ENCODE measurements at regions of chr16 and their contacts with region 1.

Region 1: GRCh38 chr16:57091975-57092785 is at the start of gene CPNE2:
- DNase-seq: peak in 2 of 5 donors; percentile 15 to 16
- H3K4me3 ChIP-seq: peak within 1 kb of the TSS in 1 of 2 donors; percentile 41
- H3K4me3 Mint-ChIP-seq: peak within 1 kb of the TSS; percentile 76 to 85 (median 82)
- H3K27ac ChIP-seq: no peak within 1 kb of the TSS
- H3K27ac Mint-ChIP-seq: peak within 1 kb of the TSS in 2 of 7 donors; percentile 50 to 60
- H3K4me1 ChIP-seq: peaks cover 14% of the 10 kb centered on the region
- H3K4me1 Mint-ChIP-seq: peaks cover 2 to 19% (median 10%) of the 10 kb centered on the region in 4 donors
- H3K27me3 ChIP-seq: no peaks in the 10 kb centered on the region
- H3K27me3 Mint-ChIP-seq: peaks cover 0 to 5% of the 10 kb centered on the region in 2 donors
- total RNA-seq, gene CPNE2: 3.8 to 4.1 TPM

Region 2: GRCh38 chr16:56789360-56789759 is 302.8 kb before region 1 on chr16:
- CTCF ChIA-PET with region 1: no interaction called
- POLR2A ChIA-PET with region 1: no interaction called
- intact Hi-C with region 1: no loop called
- DNase-seq: peak in 2 of 5 donors; percentile 15 to 22
- H3K4me3 ChIP-seq: no peak overlapping the region
- H3K4me3 Mint-ChIP-seq: no peak overlapping the region
- H3K27ac ChIP-seq: no peak overlapping the region
- H3K27ac Mint-ChIP-seq: no peak overlapping the region
- H3K4me1 ChIP-seq: no peaks in the 10 kb centered on the region
- H3K4me1 Mint-ChIP-seq: peaks cover 0 to 2% (median under 1%) of the 10 kb centered on the region in 4 donors
- H3K27me3 ChIP-seq: no peaks in the 10 kb centered on the region
- H3K27me3 Mint-ChIP-seq: no peaks in the 10 kb centered on the region

Region 3: GRCh38 chr16:57134982-57135381 is 42.8 kb after region 1 on chr16:
- CTCF ChIA-PET with region 1: interaction called, 39 read pairs
- POLR2A ChIA-PET with region 1: no interaction called
- intact Hi-C with region 1: loop called (anchors 2 kb)
- DNase-seq: peak in 4 of 5 donors; percentile 37 to 57 (median 50)
- H3K4me3 ChIP-seq: peak overlapping the region; percentile 33 to 52
- H3K4me3 Mint-ChIP-seq: peak overlapping the region; percentile 81 to 90 (median 87)
- H3K27ac ChIP-seq: peak overlapping the region; percentile 61
- H3K27ac Mint-ChIP-seq: peak overlapping the region; percentile 73 to 97 (median 93)
- H3K4me1 ChIP-seq: peaks cover 66% of the 10 kb centered on the region
- H3K4me1 Mint-ChIP-seq: peaks cover 27 to 87% (median 64%) of the 10 kb centered on the region in 4 donors
- H3K27me3 ChIP-seq: no peaks in the 10 kb centered on the region
- H3K27me3 Mint-ChIP-seq: no peaks in the 10 kb centered on the region

Region 4: DNA sequence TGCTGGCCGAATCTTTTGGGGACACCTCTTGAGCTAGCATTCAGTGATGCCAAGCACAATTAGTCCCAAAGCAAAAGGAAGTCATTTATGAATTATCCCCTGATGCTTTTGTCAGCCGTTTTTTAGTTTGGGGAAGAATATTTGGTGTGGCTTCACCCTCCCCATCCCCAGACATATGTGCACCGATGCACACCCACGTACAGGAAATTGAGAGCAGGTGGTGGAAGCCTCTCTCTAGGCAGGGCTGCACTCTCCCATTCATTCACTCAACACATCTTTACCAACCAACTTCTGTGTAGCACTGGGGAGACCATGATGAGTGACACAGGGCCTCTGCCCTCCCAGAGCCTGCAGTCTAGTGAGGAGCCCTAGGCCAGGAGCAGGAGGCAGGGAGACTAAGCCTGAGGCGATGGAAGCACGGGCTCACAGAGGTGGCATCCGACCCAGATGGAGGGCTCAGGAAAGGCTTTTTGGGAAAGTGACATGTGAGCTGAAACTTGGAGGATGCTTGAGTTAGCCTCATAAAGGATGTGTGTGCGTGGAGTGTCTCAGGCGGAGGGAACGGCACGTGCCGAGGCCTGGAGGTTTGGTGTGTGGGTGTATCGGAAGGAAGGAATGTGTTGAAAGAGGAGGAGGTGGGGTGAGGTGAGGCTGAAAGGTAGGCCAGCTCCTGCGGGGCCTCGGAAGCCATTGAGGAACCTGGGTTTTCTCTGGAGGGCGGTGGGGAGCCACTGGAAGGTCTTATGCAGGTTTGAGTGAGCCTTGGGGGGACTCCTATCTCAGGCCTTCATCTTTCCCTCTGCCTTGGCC is 49.8 kb after region 1 on chr16:
- CTCF ChIA-PET with region 1: interaction called, 39 read pairs
- POLR2A ChIA-PET with region 1: interaction called, 4 read pairs
- intact Hi-C with region 1: no loop called
- DNase-seq: peak in 4 of 5 donors; percentile 22 to 28 (median 23)
- H3K4me3 ChIP-seq: no peak overlapping the region
- H3K4me3 Mint-ChIP-seq: peak overlapping the region in 7 of 8 donors; percentile 62 to 85 (median 73)
- H3K27ac ChIP-seq: peak overlapping the region; percentile 4
- H3K27ac Mint-ChIP-seq: peak overlapping the region; percentile 78 to 96 (median 93)
- H3K4me1 ChIP-seq: peaks cover 42% of the 10 kb centered on the region
- H3K4me1 Mint-ChIP-seq: peaks cover 20 to 64% (median 46%) of the 10 kb centered on the region in 4 donors
- H3K27me3 ChIP-seq: no peaks in the 10 kb centered on the region
- H3K27me3 Mint-ChIP-seq: no peaks in the 10 kb centered on the region

Region 5: DNA sequence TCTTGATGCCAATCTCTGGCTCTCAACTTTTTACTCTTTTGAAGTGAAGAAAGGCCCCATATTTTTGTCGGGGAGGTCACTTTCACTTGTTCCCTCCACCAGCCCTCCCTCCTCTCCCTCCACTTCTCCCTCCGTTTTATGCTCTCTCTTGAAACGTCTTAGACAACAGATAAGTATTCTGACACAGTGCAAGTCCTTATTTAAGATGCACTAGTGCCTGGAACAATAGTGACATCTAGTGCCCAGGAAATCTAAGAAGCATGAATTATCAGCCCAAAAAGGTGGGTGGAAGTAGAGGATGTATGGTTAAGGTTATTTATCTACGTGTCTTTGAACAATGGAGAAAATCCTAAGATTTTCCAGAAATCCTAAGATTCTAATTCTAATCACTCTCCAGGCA is 75.8 kb after region 1 on chr16:
- CTCF ChIA-PET with region 1: interaction called, 47 read pairs
- POLR2A ChIA-PET with region 1: no interaction called
- intact Hi-C with region 1: loop called (anchors 1 kb)
- DNase-seq: peak; percentile 52 to 72 (median 65)
- H3K4me3 ChIP-seq: no peak overlapping the region
- H3K4me3 Mint-ChIP-seq: no peak overlapping the region
- H3K27ac ChIP-seq: no peak overlapping the region
- H3K27ac Mint-ChIP-seq: peak overlapping the region in 2 of 7 donors; percentile 26 to 32
- H3K4me1 ChIP-seq: peaks cover 5% of the 10 kb centered on the region
- H3K4me1 Mint-ChIP-seq: peaks cover 9 to 16% (median 11%) of the 10 kb centered on the region in 4 donors
- H3K27me3 ChIP-seq: no peaks in the 10 kb centered on the region
- H3K27me3 Mint-ChIP-seq: no peaks in the 10 kb centered on the region

Region 6: DNA sequence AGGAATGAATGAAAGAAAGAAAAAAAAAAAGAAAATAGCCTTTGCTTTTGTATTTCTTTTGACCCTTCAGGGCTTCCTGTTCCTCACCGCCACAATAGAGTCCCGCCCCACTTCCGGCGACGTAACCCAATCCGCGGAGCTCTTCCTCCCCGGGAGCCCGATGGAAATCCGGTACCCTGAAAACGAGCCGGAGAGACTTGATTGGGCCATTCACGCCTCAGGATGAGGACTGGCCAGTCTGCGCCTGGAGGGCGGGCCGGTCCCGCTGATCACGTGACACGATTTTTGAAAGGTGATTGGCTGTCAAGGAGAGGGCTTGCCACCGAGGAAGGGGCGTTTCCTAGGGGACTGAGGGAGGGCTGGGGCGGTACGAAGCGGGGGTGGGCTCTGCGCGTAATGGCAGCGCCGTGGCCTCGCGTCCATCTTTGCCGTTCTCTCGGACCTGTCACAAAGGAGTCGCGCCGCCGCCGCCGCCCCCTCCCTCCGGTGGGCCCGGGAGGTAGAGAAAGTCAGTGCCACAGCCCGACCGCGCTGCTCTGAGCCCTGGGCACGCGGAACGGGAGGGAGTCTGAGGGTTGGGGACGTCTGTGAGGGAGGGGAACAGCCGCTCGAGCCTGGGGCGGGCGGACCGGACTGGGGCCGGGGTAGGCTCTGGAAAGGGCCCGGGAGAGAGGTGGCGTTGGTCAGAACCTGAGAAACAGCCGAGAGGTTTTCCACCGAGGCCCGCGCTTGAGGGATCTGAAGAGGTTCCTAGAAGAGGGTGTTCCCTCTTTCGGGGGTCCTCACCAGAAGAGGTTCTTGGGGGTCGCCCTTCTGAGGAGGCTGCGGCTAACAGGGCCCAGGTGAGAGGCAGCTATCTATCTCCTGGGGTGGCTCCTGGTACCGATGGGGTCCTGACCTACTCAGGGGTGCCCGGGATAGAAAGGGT is 94.0 kb after region 1 on chr16 and contains the starts of genes PSME3IP1 and RSPRY1:
- CTCF ChIA-PET with region 1: interaction called, 10 read pairs
- POLR2A ChIA-PET with region 1: interaction called, 7 read pairs
- intact Hi-C with region 1: no loop called
- DNase-seq: peak; percentile 99 to 100 (median 100)
- H3K4me3 ChIP-seq: peak within 1 kb of the TSS; percentile 88
- H3K4me3 Mint-ChIP-seq: peak within 1 kb of the TSS; percentile 97 to 99 (median 99)
- H3K27ac ChIP-seq: peak within 1 kb of the TSS; percentile 87
- H3K27ac Mint-ChIP-seq: peak within 1 kb of the TSS; percentile 95 to 99 (median 97)
- H3K4me1 ChIP-seq: peaks cover 45% of the 10 kb centered on the region
- H3K4me1 Mint-ChIP-seq: peaks cover 36 to 60% (median 48%) of the 10 kb centered on the region in 4 donors
- H3K27me3 ChIP-seq: no peaks in the 10 kb centered on the region
- H3K27me3 Mint-ChIP-seq: no peaks in the 10 kb centered on the region
- total RNA-seq, gene PSME3IP1: 147 to 157 TPM
- total RNA-seq, gene RSPRY1: 32.8 to 38.0 TPM

Measured in CD4-positive, alpha-beta memory T cell (primary cell).